Activated CD8-positive, alpha-beta T cell treated with anti-CD3 and anti-CD28 coated beads for 36 hours (primary cell): ENCODE measurements at regions of chr14 and their contacts with region 1.

Region 1: DNA sequence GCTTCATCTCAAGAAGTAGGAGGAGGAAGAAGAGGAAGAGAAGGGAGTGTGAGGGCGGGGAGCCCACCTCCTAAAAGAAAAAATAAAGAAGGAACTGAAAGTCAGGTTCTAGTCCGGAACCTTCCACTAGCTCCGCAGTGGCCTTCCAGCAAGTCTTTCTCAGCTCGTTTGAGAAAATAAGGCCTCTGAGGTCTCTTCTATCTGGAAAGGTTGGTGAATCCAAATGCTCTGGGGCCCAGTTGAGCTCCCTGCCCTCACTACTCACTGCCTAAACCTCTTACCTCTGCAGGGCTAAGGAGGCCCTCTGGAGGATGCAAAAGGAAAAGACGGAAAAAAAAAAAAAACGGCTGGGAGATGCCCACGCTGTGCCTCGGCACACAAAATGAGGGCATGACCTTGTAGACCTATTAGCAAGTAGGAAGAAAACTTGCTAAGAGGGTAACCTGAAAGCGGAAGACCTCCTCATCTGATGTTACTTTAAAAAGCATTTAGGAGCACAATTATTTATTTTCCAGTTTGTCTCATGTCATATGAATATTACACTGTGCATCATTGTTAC is 35.9 kb downstream of the FBLN5 start:
- DNase-seq: peak; percentile 57
- ATAC-seq: peak; percentile 97
- H3K4me3 Mint-ChIP-seq: no peak overlapping the region
- H3K27ac Mint-ChIP-seq: no peak overlapping the region
- H3K4me1 Mint-ChIP-seq: peaks cover 19% of the 10 kb centered on the region
- H3K27me3 Mint-ChIP-seq: no peaks in the 10 kb centered on the region
- CTCF ChIP-seq: peak; percentile 52

Region 2: DNA sequence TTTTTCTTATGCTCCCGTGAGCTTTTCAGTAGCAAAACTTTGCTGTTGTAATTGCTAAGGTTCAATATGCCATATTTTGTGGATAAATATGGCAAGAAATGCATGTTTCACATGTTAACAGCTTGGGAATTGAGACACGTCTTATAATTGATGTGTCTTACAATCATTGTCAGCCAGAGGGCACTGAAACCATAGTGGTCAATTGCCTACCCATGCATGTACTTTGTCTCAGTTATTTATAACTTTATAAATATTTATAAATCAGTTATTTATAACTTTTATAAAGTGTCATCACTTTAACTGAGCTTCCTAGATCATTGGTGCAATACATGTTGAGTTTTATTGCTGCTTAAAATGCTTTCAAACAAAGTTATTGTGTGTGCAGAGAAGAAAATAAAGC is 261.6 kb before region 1 on chr14:
- CTCF ChIA-PET with region 1: interaction called, 34 read pairs
- POLR2A ChIA-PET with region 1: no interaction called
- intact Hi-C with region 1: no loop called
- DNase-seq: peak; percentile 55
- ATAC-seq: peak; percentile 68
- H3K4me3 Mint-ChIP-seq: no peak overlapping the region
- H3K27ac Mint-ChIP-seq: no peak overlapping the region
- H3K4me1 Mint-ChIP-seq: no peaks in the 10 kb centered on the region
- H3K27me3 Mint-ChIP-seq: no peaks in the 10 kb centered on the region
- CTCF ChIP-seq: peak; percentile 80

Region 3: GRCh38 chr14:91714805-91715204 is 196.7 kb before region 1 on chr14:
- CTCF ChIA-PET with region 1: interaction called, 11 read pairs
- POLR2A ChIA-PET with region 1: no interaction called
- intact Hi-C with region 1: no loop called
- DNase-seq: peak; percentile 69
- ATAC-seq: peak; percentile 85
- H3K4me3 Mint-ChIP-seq: peak overlapping the region; percentile 43
- H3K27ac Mint-ChIP-seq: peak overlapping the region; percentile 80
- H3K4me1 Mint-ChIP-seq: peaks cover 6% of the 10 kb centered on the region
- H3K27me3 Mint-ChIP-seq: no peaks in the 10 kb centered on the region
- CTCF ChIP-seq: peak; percentile 43

Region 4: DNA sequence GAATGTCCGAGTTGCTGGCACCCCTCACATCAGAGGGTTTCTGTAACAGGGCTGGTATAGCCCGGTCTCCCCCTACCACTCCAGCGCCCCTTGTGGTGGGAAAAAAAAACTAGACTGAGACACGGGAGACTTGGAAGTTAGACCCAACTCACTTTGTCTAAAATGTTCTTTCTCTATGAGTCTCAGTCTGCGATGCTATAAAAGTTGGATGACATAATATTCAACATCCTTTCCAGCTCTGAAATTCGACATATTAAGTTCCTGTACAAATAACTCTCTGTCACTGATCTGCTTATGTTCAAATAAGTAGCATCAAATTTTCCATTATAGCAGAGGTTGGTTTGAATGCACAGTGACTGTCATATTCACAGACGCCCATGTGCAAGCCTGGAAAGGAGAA is 18.5 kb before region 1 on chr14:
- CTCF ChIA-PET with region 1: interaction called, 16 read pairs
- POLR2A ChIA-PET with region 1: no interaction called
- intact Hi-C with region 1: no loop called
- DNase-seq: peak; percentile 24
- ATAC-seq: peak; percentile 52
- H3K4me3 Mint-ChIP-seq: no peak overlapping the region
- H3K27ac Mint-ChIP-seq: peak overlapping the region; percentile 76
- H3K4me1 Mint-ChIP-seq: peaks cover 52% of the 10 kb centered on the region
- H3K27me3 Mint-ChIP-seq: no peaks in the 10 kb centered on the region
- CTCF ChIP-seq: peak; percentile 66

Region 5: DNA sequence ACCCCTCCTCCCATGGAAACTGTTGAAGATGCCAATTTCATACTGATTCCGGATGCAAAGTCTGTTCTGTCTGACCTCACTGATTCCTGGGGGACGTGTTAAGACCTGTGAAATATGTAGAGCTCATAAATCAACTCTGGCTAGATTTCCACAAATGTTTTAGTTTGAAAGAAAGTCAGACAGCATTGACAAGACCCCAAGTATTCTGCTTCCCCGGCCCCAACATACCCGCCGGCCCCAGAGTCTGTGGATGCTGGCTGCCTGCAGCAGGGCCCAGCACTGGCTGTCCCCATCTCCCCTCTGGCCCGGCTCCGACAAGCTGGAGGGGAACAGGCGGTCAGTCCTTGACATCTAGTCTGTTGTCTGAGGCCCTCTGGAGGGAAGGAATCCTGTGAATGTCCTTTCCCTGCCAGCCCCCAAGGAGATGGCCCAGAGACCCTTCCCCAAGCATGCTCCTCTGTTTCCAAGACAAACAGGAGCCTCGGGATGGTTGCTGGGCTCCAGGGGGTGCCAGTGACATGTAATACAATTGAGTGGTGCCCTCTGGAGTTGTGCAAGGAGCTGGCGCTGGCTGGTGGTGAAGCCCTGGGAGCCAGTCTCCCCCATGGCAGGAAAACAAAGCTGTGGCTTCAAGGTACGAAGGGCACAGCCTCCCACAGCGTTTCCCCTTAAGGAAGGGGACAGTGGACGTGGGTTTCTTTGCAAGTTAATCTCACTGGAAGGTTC is 13.6 kb after region 1 on chr14:
- CTCF ChIA-PET with region 1: interaction called, 11 read pairs
- POLR2A ChIA-PET with region 1: no interaction called
- intact Hi-C with region 1: no loop called
- DNase-seq: no peak
- ATAC-seq: no peak
- H3K4me3 Mint-ChIP-seq: no peak overlapping the region
- H3K27ac Mint-ChIP-seq: no peak overlapping the region
- H3K4me1 Mint-ChIP-seq: no peaks in the 10 kb centered on the region
- H3K27me3 Mint-ChIP-seq: no peaks in the 10 kb centered on the region
- CTCF ChIP-seq: no peak

Region 6: DNA sequence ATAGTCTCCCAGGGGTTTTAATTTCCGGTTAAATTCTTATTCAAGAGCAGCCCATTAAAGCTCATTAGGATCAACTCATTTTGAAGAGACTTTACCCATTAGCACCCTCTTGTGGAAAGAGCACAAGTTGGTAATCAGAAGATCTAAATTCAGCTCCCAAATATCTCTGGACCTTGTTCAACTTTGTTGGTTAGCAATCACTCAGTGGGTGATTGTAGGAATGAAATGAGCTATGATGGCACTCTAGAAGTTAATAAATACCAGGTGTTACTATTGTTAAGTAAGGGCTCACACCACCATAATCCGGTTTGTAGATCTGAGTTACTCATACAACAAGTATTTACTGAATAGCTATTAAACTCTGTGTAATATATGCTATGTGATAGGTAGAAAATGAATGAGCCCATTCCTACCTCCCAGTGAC is 85.4 kb after region 1 on chr14:
- CTCF ChIA-PET with region 1: interaction called, 11 read pairs
- POLR2A ChIA-PET with region 1: no interaction called
- intact Hi-C with region 1: no loop called
- DNase-seq: no peak
- ATAC-seq: peak; percentile 68
- H3K4me3 Mint-ChIP-seq: no peak overlapping the region
- H3K27ac Mint-ChIP-seq: peak overlapping the region; percentile 19
- H3K4me1 Mint-ChIP-seq: peaks cover 45% of the 10 kb centered on the region
- H3K27me3 Mint-ChIP-seq: no peaks in the 10 kb centered on the region
- CTCF ChIP-seq: peak; percentile 82